Heart right ventricle (tissue), 16 donors: ENCODE measurements at regions of chr7 and their contacts with region 1.

Region 1: DNA sequence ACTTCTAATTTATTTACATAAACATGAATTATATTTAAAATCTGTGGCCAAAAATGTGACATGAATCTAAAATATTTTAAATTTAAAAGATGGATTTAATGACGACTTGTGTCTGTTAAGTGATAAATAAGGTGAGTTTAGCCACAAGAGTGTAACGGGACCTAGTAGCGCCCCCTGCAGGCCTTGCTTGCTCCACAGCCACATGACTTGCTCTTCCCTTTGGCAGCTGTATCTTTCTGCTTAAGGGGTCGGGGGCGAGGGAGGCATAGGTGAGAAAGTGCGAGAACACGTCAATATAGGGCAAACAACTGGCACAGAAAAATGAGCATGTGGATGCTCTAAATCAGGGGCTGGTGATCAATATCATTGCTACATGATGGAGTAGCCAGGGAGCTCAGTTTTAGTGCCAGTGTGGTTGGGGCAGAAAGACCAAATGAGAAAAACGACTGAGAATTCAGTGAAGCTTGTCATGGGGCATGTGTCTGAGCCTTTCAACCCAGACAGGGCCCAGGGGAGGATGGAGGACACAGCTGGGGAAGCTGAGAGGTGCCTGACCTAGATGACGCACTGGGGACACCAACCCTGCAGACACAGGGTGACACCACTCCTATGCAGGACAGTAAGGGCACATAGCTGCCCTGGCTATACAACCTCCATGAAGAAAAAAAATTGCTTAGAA is 49.8 kb downstream of the PAXIP1 start:
- DNase-seq: peak; percentile 29 to 54
- ATAC-seq: no peak
- H3K4me3 ChIP-seq: no peak overlapping the region
- H3K27ac ChIP-seq: no peak overlapping the region
- H3K4me1 ChIP-seq: no peaks in the 10 kb centered on the region
- H3K27me3 ChIP-seq: no peaks in the 10 kb centered on the region
- CTCF ChIP-seq: peak; percentile 9 to 74 (median 62)

Region 2: GRCh38 chr7:154627646-154628290 is 325.4 kb before region 1 on chr7:
- intact Hi-C with region 1: no loop called
- DNase-seq: no peak
- ATAC-seq: no peak
- H3K4me3 ChIP-seq: no peak overlapping the region
- H3K27ac ChIP-seq: no peak overlapping the region
- H3K4me1 ChIP-seq: no peaks in the 10 kb centered on the region
- H3K27me3 ChIP-seq: peaks cover 0 to 9% (median 0%) of the 10 kb centered on the region in 7 donors
- CTCF ChIP-seq: no peak

Region 3: GRCh38 chr7:154937837-154938236 is 15.3 kb before region 1 on chr7:
- intact Hi-C with region 1: no loop called
- DNase-seq: no peak
- ATAC-seq: no peak
- H3K4me3 ChIP-seq: no peak overlapping the region
- H3K27ac ChIP-seq: no peak overlapping the region
- H3K4me1 ChIP-seq: no peaks in the 10 kb centered on the region
- H3K27me3 ChIP-seq: no peaks in the 10 kb centered on the region
- CTCF ChIP-seq: no peak

Region 4: GRCh38 chr7:155003376-155004214 is 50.5 kb after region 1 on chr7:
- intact Hi-C with region 1: loop called in 1 of 10 experiments (anchors 10 kb)
- DNase-seq: peak; percentile 72 to 80
- ATAC-seq: peak; percentile 97 to 99 (median 98)
- H3K4me3 ChIP-seq: peak overlapping the region; percentile 72 to 100 (median 95)
- H3K27ac ChIP-seq: peak overlapping the region; percentile 76 to 97 (median 93)
- H3K4me1 ChIP-seq: peaks cover 2 to 28% (median 16%) of the 10 kb centered on the region in 9 donors
- H3K27me3 ChIP-seq: no peaks in the 10 kb centered on the region
- CTCF ChIP-seq: no peak